HepG2 (cell line): ENCODE measurements at regions of chr2 and their contacts with region 1.

Region 1: DNA sequence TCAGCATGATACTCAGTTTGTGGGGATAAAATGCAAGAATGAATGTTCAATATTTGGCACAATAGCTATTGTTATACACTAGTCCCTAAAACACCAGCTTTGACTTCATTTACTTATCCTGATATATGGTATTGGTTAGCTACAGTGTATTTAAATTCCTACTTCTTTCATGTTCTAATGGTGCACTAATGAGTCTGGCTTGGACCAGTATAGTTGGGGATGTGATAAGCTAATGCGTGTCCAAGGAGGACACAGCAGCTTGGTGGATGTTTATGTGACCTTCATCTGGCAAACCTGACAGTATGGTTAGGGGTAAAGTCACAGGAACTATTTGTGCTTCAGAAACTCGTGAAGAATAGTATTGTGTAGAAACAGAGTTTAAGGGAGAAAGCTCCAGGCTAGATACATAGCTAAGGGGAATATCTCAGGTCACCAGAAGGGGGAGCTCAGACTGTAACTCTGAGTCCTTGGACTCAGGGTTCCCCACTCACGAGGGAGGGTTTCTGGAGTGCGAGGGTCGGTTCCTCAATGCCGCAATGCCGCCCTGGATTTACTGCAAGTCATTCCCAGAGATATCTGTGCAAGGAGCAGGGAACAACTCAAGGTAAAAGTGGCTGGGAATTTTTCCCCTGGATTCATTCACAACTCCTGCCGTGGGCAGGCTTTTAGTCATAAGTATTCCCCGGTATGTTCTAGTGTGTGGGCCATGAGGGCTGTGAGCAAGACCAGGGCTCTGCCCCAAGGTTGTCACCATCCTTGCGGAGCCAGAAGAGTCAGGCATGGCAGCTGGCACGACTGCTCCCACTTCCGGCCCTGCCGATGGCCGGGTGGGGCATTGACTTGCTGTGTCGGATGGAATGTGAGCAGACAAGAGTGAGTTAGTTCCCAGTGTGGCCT is 14.5 kb downstream of the IL1R2 start:
- DNase-seq: peak; percentile 73
- ATAC-seq: peak; percentile 97
- H3K4me3 ChIP-seq: no peak overlapping the region
- H3K27ac ChIP-seq: no peak overlapping the region
- H3K4me1 ChIP-seq: peaks cover 14% of the 10 kb centered on the region
- H3K27me3 ChIP-seq: no peaks in the 10 kb centered on the region
- CTCF ChIP-seq: peak; percentile 90
- EP300 ChIP-seq: no peak
- POLR2A ChIP-seq: no peak
- RAD21 ChIP-seq: peak; percentile 86

Region 2: DNA sequence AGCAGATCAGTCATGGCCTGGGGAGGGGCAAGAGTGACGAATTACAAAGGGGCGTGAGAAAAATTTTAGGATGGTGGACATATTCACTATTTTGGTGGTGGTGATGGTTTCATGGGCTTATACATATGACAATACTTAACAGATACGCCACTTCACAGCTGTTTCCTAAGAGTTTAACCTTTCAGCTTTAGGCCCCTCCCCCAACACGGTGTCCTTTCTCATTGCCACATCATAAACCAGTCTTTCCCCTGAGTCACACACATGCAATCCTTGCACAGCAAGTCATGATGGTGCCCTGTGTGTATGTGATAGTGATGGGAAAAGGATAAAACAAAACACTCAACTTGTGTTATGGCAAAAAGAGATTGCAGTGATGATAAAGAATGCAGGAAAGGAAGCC is 88.7 kb after region 1 on chr2:
- CTCF ChIA-PET with region 1: no interaction called
- POLR2A ChIA-PET with region 1: no interaction called
- in situ Hi-C with region 1: no loop called
- intact Hi-C with region 1: no loop called
- DNase-seq: peak; percentile 82
- ATAC-seq: peak; percentile 82
- H3K4me3 ChIP-seq: no peak overlapping the region
- H3K27ac ChIP-seq: no peak overlapping the region
- H3K4me1 ChIP-seq: peaks cover 24% of the 10 kb centered on the region
- H3K27me3 ChIP-seq: no peaks in the 10 kb centered on the region
- CTCF ChIP-seq: no peak
- EP300 ChIP-seq: peak in 1 of 2 experiments; percentile 52; a peak in 2 of 4 replicates
- POLR2A ChIP-seq: no peak
- RAD21 ChIP-seq: peak; percentile 22; the same call in 1 of the 2 replicates

Region 3: GRCh38 chr2:102240640-102241370 is 234.6 kb after region 1 on chr2:
- CTCF ChIA-PET with region 1: interaction called, 25 read pairs
- POLR2A ChIA-PET with region 1: interaction called, 8 read pairs
- in situ Hi-C with region 1: no loop called
- intact Hi-C with region 1: loop called (anchors 1 kb)
- DNase-seq: peak; percentile 88
- ATAC-seq: peak; percentile 97
- H3K4me3 ChIP-seq: peak overlapping the region in 2 of 3 experiments; percentile 12 to 55; a peak in 3 of 6 replicates
- H3K27ac ChIP-seq: no peak overlapping the region
- H3K4me1 ChIP-seq: peaks cover 49% of the 10 kb centered on the region
- H3K27me3 ChIP-seq: peaks cover 0 to 38% of the 10 kb centered on the region in 2 experiments; a peak in 3 of 5 replicates
- CTCF ChIP-seq: peak; percentile 100
- EP300 ChIP-seq: peak in 1 of 2 experiments; percentile 86; a peak in 2 of 4 replicates
- POLR2A ChIP-seq: no peak
- RAD21 ChIP-seq: peak; percentile 97

Region 4: GRCh38 chr2:102449370-102449974 is 443.2 kb after region 1 on chr2:
- CTCF ChIA-PET with region 1: no interaction called
- POLR2A ChIA-PET with region 1: no interaction called
- in situ Hi-C with region 1: loop called (anchors 5 kb)
- intact Hi-C with region 1: loop called (anchors 1 kb)
- DNase-seq: peak; percentile 23
- ATAC-seq: peak; percentile 53; the same call in 2 of the 3 replicates
- H3K4me3 ChIP-seq: no peak overlapping the region
- H3K27ac ChIP-seq: no peak overlapping the region
- H3K4me1 ChIP-seq: no peaks in the 10 kb centered on the region
- H3K27me3 ChIP-seq: peaks cover 0 to 3% of the 10 kb centered on the region in 2 experiments; a peak in 1 of 5 replicates
- CTCF ChIP-seq: peak; percentile 72
- EP300 ChIP-seq: no peak
- POLR2A ChIP-seq: no peak
- RAD21 ChIP-seq: no peak